Right ventricle myocardium superior (tissue), 1 donor: ENCODE measurements at regions of chr1 and their contacts with region 1.

Region 1: DNA sequence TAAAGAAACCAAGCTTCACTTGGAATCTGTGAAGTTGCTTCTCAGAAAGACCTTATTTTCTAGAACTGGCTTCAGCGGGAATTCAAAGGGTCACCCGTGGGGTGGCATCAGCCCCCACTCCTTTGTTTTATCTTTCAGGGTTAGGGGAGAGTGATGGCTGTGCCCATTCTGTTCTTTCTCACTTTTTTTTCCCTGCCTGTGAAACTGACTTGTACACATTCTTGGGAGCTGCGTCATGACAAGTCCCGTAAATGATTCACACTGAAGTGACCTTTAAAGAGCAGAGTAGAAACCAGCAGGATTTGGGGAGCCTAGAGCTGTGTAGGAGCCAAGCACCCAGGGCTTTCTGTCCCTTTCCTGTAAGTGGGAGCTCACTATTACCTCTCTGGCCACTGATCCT is 43.8 kb downstream of the SLC44A3 start:
- DNase-seq: no peak
- ATAC-seq: peak; percentile 78

Region 2: DNA sequence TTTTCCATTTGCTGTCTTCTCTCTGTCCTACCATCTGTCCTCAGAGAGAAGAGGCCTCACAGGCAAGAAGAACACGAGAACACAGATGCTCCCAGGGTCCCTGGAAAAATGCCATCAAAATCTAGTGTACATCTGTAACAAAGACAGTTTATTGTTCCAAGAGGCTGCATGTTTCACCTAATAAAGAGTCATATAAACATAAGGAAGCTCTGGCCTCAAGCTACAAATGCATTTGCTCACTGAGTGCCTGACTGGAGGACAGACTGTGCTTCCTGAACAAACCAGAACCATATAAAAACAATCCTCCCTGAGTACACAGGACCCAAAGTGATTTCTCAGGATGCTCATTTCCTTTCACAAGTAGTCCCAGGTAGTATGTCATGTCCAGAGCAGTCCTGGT is 120.1 kb before region 1 on chr1:
- intact Hi-C with region 1: no loop called
- DNase-seq: no peak
- ATAC-seq: no peak

Region 3: GRCh38 chr1:94912263-94913184 is 48.6 kb after region 1 on chr1:
- intact Hi-C with region 1: loop called (anchors 5 kb)
- DNase-seq: no peak
- ATAC-seq: no peak